Aorta (tissue), 5 donors: ENCODE measurements at regions of chr6 and their contacts with region 1.

Region 1: GRCh38 chr6:125066964-125067363 is 86.6 kb upstream of the TPD52L1 start:
- DNase-seq: no peak
- ATAC-seq: peak; percentile 29
- H3K4me3 ChIP-seq: no peak overlapping the region
- H3K27ac ChIP-seq: no peak overlapping the region
- H3K4me1 ChIP-seq: peaks cover 0 to 4% of the 10 kb centered on the region in 2 donors
- H3K27me3 ChIP-seq: no peaks in the 10 kb centered on the region

Region 2: DNA sequence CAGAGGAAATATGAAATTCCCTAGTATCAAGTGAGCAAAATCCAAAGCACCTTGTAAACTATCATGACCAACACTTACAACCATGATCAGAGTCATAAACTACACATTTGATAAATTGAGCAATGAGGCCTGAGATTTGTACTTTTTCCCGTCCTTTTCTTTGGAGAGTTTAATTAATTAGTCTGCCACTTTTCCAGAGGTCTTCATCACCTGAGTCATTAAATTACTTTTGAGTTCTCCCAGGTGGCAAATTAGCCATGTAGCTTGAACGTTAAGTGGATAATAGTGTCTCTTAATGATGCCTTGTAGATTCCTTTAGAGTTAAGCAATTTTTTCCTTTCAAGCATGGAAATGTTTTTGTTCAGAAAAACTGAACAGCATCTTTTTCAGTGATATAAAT is 29.1 kb before region 1 on chr6:
- intact Hi-C with region 1: loop called in 1 of 2 experiments (anchors 2 kb)
- DNase-seq: no peak
- ATAC-seq: no peak
- H3K4me3 ChIP-seq: no peak overlapping the region
- H3K27ac ChIP-seq: no peak overlapping the region
- H3K4me1 ChIP-seq: peaks cover 2 to 4% of the 10 kb centered on the region in 2 donors
- H3K27me3 ChIP-seq: no peaks in the 10 kb centered on the region

Region 3: GRCh38 chr6:125486881-125487280 is 419.9 kb after region 1 on chr6:
- intact Hi-C with region 1: no loop called
- DNase-seq: no peak
- ATAC-seq: no peak
- H3K4me3 ChIP-seq: no peak overlapping the region
- H3K27ac ChIP-seq: no peak overlapping the region
- H3K4me1 ChIP-seq: peaks cover 0 to 2% of the 10 kb centered on the region in 2 donors
- H3K27me3 ChIP-seq: no peaks in the 10 kb centered on the region